AG04450 (cell line): ENCODE measurements at regions of chr9 and their contacts with region 1.

Region 1: DNA sequence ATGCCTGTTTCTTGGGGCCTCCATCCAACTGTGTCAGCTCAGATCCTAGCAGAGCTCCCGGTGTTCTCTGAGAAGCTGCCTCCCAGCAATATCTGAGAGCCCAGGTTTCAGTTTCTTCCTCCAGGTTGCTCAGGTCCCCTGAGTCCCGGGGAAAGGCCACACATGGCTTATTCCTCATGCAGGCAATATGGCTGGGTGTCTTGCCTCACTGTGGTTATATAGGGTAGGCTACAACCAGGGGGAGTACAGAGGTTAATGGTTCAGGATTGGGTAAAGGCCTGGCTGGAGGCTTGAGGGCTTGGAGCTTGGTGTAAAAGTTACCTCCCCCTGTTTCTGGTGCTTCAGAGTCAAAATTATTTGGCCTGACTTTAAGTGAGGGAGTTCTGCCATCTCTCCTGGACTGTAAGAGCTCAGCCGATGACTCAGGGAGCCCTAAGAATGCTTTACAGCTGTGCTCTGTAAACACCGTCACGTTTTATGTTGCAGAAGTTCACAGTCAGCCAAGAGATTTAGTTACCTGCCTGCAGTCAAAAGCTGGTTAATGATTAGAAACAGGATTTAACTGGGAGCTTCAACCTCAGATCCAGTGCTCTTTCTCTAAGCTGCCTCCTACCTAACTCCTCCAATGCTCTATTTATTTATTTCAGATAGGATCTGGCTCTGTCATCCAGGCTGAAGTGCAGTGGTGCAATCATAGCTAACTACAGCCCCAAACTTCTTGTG is 24.3 kb upstream of the UBAP2 start:
- DNase-seq: peak; percentile 93
- H3K4me3 ChIP-seq: no peak overlapping the region
- H3K27ac ChIP-seq: peak overlapping the region; percentile 91
- H3K27me3 ChIP-seq: no peaks in the 10 kb centered on the region
- CTCF ChIP-seq: no peak

Region 2: DNA sequence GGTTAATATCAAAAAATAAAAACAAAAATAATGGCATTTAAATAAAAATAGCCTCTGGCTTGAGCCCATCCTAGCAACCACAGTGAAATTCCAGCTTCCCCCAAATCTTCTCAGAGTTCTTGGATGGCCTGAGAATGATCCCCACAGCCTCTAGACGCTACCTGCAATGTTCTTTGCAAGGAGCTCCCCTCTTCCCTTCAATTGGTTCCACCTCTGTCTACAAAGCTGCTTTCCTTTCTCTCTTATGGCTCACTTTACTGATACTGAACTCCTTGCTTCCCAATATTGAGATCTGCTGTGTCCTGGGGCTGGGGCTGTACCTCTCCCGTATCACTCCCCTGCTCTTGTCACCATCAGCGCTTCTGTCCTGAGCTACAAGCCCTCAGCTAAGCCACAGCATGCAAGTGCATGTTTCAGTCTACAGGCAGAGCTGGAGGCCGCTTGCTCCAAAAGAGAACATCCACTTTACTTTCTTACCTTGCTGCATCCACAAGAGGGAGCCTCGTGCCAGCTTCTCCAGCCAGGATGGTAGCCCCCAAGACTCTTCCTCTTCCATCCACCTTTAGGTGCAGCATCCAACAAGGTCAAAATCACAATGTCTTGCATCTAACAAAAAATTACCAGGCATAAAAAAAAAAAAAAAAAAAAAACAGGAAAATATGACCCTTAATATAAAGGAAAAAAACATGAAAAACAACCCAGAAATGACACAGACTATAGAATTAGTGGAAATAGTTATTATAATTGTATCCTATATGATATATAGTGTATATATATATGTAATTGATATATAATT is 335.0 kb before region 1 on chr9:
- CTCF ChIA-PET with region 1: interaction called, 18 read pairs
- POLR2A ChIA-PET with region 1: no interaction called
- DNase-seq: peak; percentile 29
- H3K4me3 ChIP-seq: no peak overlapping the region
- H3K27ac ChIP-seq: no peak overlapping the region
- H3K27me3 ChIP-seq: no peaks in the 10 kb centered on the region
- CTCF ChIP-seq: peak; percentile 86

Region 3: GRCh38 chr9:33924978-33925797 is 147.8 kb before region 1 on chr9:
- CTCF ChIA-PET with region 1: interaction called, 51 read pairs
- POLR2A ChIA-PET with region 1: interaction called, 3 read pairs
- DNase-seq: peak; percentile 16
- H3K4me3 ChIP-seq: no peak overlapping the region
- H3K27ac ChIP-seq: no peak overlapping the region
- H3K27me3 ChIP-seq: no peaks in the 10 kb centered on the region
- CTCF ChIP-seq: peak; percentile 75

Region 4: GRCh38 chr9:34010979-34011378 is 62.0 kb before region 1 on chr9:
- CTCF ChIA-PET with region 1: interaction called, 12 read pairs
- POLR2A ChIA-PET with region 1: interaction called, 10 read pairs
- DNase-seq: no peak
- H3K4me3 ChIP-seq: no peak overlapping the region
- H3K27ac ChIP-seq: no peak overlapping the region
- H3K27me3 ChIP-seq: no peaks in the 10 kb centered on the region
- CTCF ChIP-seq: peak; percentile 44

Region 5: DNA sequence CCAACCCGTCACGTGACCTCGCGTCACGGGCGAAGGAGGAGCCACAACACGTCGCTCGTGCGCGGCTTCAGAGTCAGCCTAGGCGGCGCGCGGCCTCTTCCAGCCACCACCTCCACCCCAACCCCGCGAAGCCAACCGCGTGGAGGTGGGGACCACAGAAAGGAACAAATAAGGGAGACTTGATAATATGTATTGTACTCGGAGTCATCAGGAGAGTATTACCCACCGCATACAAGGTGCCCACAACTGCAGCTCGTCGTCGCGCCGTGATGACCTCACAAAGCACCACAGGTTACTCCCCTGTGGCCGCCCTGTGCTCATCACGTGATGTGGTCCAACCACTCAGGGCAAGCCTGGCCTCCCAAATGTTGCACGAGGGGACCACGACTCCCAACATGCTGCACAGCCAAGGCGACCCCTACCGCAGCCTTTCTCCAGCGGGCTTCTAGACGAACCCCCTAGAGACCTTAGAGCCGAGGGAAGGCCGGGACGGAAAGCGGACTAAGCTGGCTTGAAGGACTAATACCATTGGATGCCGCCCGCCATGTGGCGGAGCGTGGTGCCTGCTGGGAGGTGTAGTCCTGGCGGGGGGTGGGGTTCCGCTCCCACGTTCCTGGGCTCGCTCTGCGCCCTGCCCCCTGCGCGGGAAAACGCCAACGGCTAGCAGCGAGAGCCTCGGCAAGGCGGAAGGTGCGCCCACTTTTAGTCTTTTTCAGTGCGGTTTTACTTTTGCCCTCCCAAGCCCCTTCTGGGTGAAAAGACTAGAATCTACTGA is 23.9 kb before region 1 on chr9:
- CTCF ChIA-PET with region 1: interaction called, 9 read pairs
- POLR2A ChIA-PET with region 1: interaction called, 35 read pairs
- DNase-seq: peak; percentile 92
- H3K4me3 ChIP-seq: peak overlapping the region; percentile 93
- H3K27ac ChIP-seq: peak overlapping the region; percentile 93
- H3K27me3 ChIP-seq: no peaks in the 10 kb centered on the region
- CTCF ChIP-seq: peak; percentile 15; the same call in 1 of the 2 replicates

Region 6: GRCh38 chr9:34084562-34084961 is 11.5 kb after region 1 on chr9:
- CTCF ChIA-PET with region 1: interaction called, 47 read pairs
- POLR2A ChIA-PET with region 1: no interaction called
- DNase-seq: no peak
- H3K4me3 ChIP-seq: no peak overlapping the region
- H3K27ac ChIP-seq: no peak overlapping the region
- H3K27me3 ChIP-seq: no peaks in the 10 kb centered on the region
- CTCF ChIP-seq: no peak